ENCODE measurements at regions of chr5 and their contacts with region 1.

Region 1: DNA sequence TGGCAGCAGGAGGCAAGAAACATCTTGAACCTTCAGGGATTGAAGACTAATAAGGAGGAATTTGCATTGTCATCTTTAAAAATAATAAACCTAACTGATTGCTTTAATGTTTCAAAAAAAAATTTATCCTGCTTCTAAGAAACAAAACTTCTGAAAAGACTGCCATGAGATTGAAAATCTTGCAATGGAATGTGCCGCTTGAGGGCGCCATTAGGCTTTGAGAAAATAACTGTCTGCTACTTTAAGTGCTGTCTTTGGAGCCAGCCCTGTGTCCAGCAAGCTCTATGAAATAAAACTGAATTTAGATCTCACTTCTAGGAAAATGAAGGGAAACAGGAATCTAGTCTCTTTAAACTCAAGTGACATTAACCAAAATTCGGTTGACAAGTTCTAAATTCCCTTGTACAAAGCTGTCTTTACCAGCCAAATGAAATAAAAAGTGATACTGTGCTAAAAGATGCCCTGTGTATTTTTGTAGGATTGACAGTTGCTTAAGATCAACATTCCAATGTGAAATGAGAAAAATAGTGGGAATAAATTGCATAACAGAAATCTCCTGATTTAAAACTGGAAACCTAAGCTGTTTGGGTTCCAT is 79.4 kb downstream of the ESM1 start:
- DNase-seq: peak; percentile 66
- ATAC-seq: peak; percentile 43; the same call in 1 of the 2 replicates
- H3K4me3 ChIP-seq: no peak overlapping the region
- H3K27ac ChIP-seq: no peak overlapping the region
- H3K4me1 ChIP-seq: no peaks in the 10 kb centered on the region
- H3K27me3 ChIP-seq: no peaks in the 10 kb centered on the region
- CTCF ChIP-seq: peak; percentile 74

Region 2: GRCh38 chr5:54229041-54229780 is 676.8 kb before region 1 on chr5:
- CTCF ChIA-PET with region 1: no interaction called
- POLR2A ChIA-PET with region 1: no interaction called
- intact Hi-C with region 1: no loop called
- DNase-seq: peak; percentile 64
- ATAC-seq: peak; percentile 63
- H3K4me3 ChIP-seq: no peak overlapping the region
- H3K27ac ChIP-seq: no peak overlapping the region
- H3K4me1 ChIP-seq: no peaks in the 10 kb centered on the region
- H3K27me3 ChIP-seq: no peaks in the 10 kb centered on the region
- CTCF ChIP-seq: peak; percentile 79

Region 3: GRCh38 chr5:54944364-54944763 is 38.3 kb after region 1 on chr5:
- CTCF ChIA-PET with region 1: interaction called, 3 read pairs
- POLR2A ChIA-PET with region 1: no interaction called
- intact Hi-C with region 1: loop called (anchors 1 kb)
- DNase-seq: peak; percentile 40
- ATAC-seq: peak; percentile 53
- H3K4me3 ChIP-seq: no peak overlapping the region
- H3K27ac ChIP-seq: no peak overlapping the region
- H3K4me1 ChIP-seq: no peaks in the 10 kb centered on the region
- H3K27me3 ChIP-seq: no peaks in the 10 kb centered on the region
- CTCF ChIP-seq: peak; percentile 66

Region 4: DNA sequence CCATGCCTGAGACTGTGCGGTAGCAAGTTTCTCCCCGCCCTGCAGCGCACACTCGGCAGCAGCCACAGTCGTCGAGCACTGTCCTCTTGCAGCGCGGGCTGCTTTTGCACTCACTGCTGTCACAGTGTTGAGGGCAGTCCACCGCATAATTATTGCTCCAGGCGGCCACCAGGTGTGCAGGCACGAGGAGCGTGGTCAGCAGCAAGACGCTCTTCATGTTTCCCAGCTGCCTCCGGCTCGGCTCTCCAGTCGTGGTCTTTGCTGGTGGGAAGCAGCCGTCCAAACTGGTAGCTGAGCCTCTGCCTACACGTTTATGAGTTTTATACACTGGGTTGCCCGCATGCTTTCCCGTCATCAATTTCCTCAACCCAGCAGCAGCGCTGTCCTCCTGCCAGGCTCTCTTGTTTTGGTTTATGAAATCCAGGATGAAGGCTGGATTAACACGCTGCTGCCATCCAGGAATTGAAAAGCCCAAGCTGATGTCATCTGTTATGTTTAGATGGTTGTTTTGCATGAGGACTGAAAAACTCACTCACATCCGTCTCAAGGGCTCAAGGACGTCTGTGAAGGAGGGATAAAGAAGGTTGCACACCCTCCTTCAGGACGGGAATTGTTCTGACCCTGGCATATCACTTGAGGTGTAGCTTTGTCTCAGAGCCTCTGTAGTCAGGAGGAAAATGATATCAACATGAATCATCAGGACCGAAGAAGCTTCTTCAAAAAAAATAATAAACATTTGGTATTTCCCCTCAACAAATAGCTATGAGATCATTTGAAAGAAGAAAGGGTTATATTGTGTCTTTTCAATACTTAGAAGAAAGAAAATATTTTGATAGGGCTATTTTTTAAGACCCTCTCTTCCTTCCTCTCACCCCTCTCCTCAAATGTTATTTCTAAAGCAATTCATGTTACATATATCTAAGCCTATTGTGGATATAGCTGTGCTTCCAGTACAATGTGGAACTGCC is 79.5 kb after region 1 on chr5 and contains the start of gene ESM1:
- CTCF ChIA-PET with region 1: no interaction called
- POLR2A ChIA-PET with region 1: no interaction called
- intact Hi-C with region 1: no loop called
- DNase-seq: peak; percentile 61
- ATAC-seq: peak; percentile 83
- H3K4me3 ChIP-seq: peak within 1 kb of the TSS; percentile 62
- H3K27ac ChIP-seq: peak within 1 kb of the TSS; percentile 27
- H3K4me1 ChIP-seq: peaks cover 10% of the 10 kb centered on the region
- H3K27me3 ChIP-seq: no peaks in the 10 kb centered on the region
- CTCF ChIP-seq: no peak
- total RNA-seq, gene ESM1: 21.0 and 27.8 TPM in 2 replicates

Region 5: GRCh38 chr5:55146543-55147151 is 240.6 kb after region 1 on chr5:
- CTCF ChIA-PET with region 1: no interaction called
- POLR2A ChIA-PET with region 1: no interaction called
- intact Hi-C with region 1: loop called (anchors 1 kb)
- DNase-seq: peak; percentile 83
- ATAC-seq: peak; percentile 97
- H3K4me3 ChIP-seq: no peak overlapping the region
- H3K27ac ChIP-seq: no peak overlapping the region
- H3K4me1 ChIP-seq: peaks cover 2% of the 10 kb centered on the region
- H3K27me3 ChIP-seq: no peaks in the 10 kb centered on the region
- CTCF ChIP-seq: peak; percentile 76

Region 6: GRCh38 chr5:55159763-55160492 is 253.9 kb after region 1 on chr5 and contains the start of gene GPX8:
- CTCF ChIA-PET with region 1: interaction called, 19 read pairs
- POLR2A ChIA-PET with region 1: no interaction called
- intact Hi-C with region 1: loop called (anchors 1 kb)
- DNase-seq: peak; percentile 72
- ATAC-seq: peak; percentile 91
- H3K4me3 ChIP-seq: peak within 1 kb of the TSS; percentile 91
- H3K27ac ChIP-seq: peak within 1 kb of the TSS; percentile 54
- H3K4me1 ChIP-seq: peaks cover 12% of the 10 kb centered on the region
- H3K27me3 ChIP-seq: no peaks in the 10 kb centered on the region
- CTCF ChIP-seq: peak; percentile 88
- total RNA-seq, gene GPX8: 13.0 and 18.3 TPM in 2 replicates